ENCODE measurements at regions of chr1 and their contacts with region 1.

Region 1: GRCh38 chr1:234680331-234680904 is 70.4 kb upstream of the IRF2BP2 start:
- DNase-seq: no peak
- H3K4me3 ChIP-seq: no peak overlapping the region
- CTCF ChIP-seq: no peak
- POLR2A ChIP-seq: no peak

Region 2: DNA sequence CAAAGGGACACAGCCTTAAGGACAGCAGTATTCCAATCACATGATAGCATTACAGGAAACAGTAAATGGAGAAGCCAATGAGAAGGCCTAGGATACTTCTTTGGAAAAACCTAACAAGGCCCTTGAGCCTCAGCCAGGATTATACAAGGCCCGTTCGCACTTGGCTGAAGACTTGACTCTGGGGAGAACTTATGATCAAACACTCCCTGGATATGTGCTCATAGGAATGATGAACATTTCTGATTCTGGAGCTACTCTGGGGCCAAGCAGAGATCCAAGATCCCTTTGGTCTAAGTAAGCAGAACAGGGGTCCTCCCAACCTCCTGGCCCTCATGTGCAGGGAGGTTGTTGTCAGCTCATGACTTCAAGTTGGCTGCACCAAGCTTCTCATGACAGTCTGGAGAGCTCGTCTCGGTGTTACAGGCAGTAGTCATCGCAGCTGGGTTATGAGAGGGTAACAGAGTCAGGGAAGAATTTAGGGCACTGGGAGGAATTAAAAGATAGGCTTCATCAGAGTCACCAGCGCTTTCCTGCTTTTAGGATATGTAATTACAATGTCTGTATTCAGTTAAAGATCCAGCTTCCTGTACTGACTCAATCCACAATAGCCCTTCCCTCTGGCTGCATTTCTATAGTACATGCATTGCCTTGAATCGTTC is 22.1 kb after region 1 on chr1:
- intact Hi-C with region 1: loop called (anchors 1 kb)
- DNase-seq: peak; percentile 82 to 91
- H3K4me3 ChIP-seq: no peak overlapping the region
- CTCF ChIP-seq: no peak
- POLR2A ChIP-seq: no peak

Region 3: GRCh38 chr1:234743791-234744611 is 63.6 kb after region 1 on chr1:
- intact Hi-C with region 1: no loop called
- DNase-seq: no peak
- H3K4me3 ChIP-seq: no peak overlapping the region
- CTCF ChIP-seq: no peak
- POLR2A ChIP-seq: no peak

Measured in lower leg skin (tissue), 4 donors.